Esophagus muscularis mucosa (tissue), 4 donors: ENCODE measurements at regions of chr4 and their contacts with region 1.

Region 1: DNA sequence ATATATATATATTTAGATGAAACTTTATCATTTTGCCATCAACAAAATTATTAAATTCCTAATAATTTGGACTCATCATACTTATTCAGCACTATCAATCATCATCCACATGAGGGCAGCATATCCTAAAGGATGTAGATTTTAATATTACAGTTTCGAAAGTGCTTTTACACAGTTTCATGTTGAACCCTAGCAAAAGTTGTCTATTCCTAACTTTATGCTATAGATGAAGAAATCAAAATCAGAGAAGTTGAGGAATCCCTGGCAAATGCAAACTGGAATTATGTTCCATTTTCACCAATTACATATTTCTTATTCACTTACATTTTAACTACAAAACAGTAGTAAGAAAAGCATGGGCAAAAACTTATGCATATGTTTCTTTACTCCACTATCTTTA is 36.6 kb upstream of the UGT2A1 start:
- DNase-seq: no peak
- H3K4me3 ChIP-seq: no peak overlapping the region
- H3K27ac ChIP-seq: no peak overlapping the region
- H3K4me1 ChIP-seq: no peaks in the 10 kb centered on the region
- H3K27me3 ChIP-seq: no peaks in the 10 kb centered on the region
- CTCF ChIP-seq: peak; percentile 28 to 48 (median 47)
- EP300 ChIP-seq: no peak
- POLR2A ChIP-seq: no peak

Region 2: DNA sequence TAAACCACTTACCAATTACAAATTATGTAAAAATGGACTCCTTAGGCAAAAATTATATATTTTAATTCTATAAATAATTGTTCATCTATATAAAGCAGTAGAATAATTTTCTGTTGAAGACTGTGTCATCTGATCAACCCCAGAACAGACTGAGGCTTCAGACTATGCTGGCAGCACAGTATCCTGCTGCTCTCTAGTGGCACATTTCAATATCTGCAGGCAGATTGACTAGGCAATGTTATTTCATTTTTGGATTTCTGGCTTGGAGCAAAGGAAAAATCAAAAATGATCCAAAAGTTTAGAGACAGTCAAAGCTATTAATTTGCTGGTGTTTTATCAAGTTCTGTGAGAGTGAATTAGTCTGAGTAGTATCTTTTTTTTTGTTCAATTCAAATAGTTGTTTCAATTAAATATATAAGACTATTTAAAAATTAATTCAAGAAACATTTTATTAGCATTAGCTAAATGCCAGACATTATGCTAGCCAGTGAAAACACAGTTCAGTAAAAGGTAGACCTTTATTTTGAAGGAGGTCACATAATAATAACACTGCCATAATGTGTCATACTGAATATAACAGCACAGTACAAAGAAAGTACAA is 191.7 kb after region 1 on chr4:
- intact Hi-C with region 1: loop called (anchors 10 kb)
- DNase-seq: no peak
- H3K4me3 ChIP-seq: no peak overlapping the region
- H3K27ac ChIP-seq: no peak overlapping the region
- H3K4me1 ChIP-seq: no peaks in the 10 kb centered on the region
- H3K27me3 ChIP-seq: no peaks in the 10 kb centered on the region
- CTCF ChIP-seq: peak; percentile 43 to 55 (median 48)
- EP300 ChIP-seq: no peak
- POLR2A ChIP-seq: no peak

Region 3: DNA sequence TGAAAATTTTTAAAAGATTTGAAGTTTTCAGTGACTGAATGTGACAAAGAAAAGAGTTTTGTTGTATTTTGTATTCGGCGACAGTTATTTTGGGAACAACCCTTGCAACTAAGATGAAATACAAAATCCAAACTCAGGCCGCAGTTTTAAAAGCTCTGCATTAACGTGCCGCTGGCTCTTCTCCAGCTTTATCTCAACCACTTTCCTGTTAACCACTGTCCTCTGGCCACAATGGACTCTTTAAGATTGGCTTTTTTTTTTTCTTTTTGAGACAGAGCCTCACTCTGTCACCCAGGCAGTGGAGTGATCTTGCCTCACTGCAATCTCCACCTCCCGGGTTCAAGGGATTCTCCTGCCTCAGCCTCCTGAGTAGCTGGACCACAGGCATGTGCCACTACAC is 806.6 kb after region 1 on chr4:
- intact Hi-C with region 1: loop called (anchors 5 kb)
- DNase-seq: no peak
- H3K4me3 ChIP-seq: no peak overlapping the region
- H3K27ac ChIP-seq: no peak overlapping the region
- H3K4me1 ChIP-seq: no peaks in the 10 kb centered on the region
- H3K27me3 ChIP-seq: no peaks in the 10 kb centered on the region
- CTCF ChIP-seq: no peak
- EP300 ChIP-seq: no peak
- POLR2A ChIP-seq: no peak

Region 4: DNA sequence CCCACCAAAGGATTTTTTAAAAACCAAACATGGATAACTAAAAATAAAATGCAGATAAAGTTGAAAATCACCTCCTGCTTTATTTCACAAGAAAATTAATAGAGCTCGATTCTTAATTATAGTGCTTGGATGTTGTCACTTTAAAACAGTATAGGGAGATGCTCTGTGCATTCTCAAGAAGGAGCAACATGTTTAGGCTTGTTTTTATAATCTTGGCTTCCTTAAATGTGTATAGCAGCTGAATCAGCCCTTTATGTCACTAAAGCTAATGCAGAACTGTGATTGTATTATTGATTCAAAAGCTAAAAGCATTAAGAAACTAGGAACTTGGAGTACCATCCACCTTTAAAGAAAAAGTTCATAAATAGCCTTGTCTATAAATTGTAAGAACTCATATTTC is 1011.7 kb after region 1 on chr4:
- intact Hi-C with region 1: no loop called
- DNase-seq: no peak
- H3K4me3 ChIP-seq: no peak overlapping the region
- H3K27ac ChIP-seq: no peak overlapping the region
- H3K4me1 ChIP-seq: peaks cover 9 to 17% (median 15%) of the 10 kb centered on the region in 4 donors
- H3K27me3 ChIP-seq: no peaks in the 10 kb centered on the region
- CTCF ChIP-seq: no peak
- EP300 ChIP-seq: no peak
- POLR2A ChIP-seq: no peak